ENCODE measurements at regions of chr22 and their contacts with region 1.

Region 1: GRCh38 chr22:17171313-17172171 is 12.5 kb upstream of the HDHD5 start:
- DNase-seq: peak; percentile 79 to 97
- H3K4me3 ChIP-seq: peak overlapping the region; percentile 39 to 69 (median 60)
- H3K27ac ChIP-seq: peak overlapping the region; percentile 41; the same call in 1 of the 2 replicates
- H3K4me1 ChIP-seq: peaks cover 0 to 11% (median 5%) of the 10 kb centered on the region in 4 experiments; a peak in 5 of 7 replicates
- H3K27me3 ChIP-seq: no peaks in the 10 kb centered on the region
- CTCF ChIP-seq: peak; percentile 81 to 92 (median 83)
- EP300 ChIP-seq: peak; percentile 2 to 29; a peak in 1 of 3 replicates
- POLR2A ChIP-seq: peak in 1 of 2 experiments; percentile 75; a peak in 2 of 3 replicates
- RAD21 ChIP-seq: peak; percentile 58 to 74

Region 2: GRCh38 chr22:17077255-17077654 is 94.3 kb before region 1 on chr22:
- CTCF ChIA-PET with region 1: interaction called, 10 read pairs
- POLR2A ChIA-PET with region 1: no interaction called
- DNase-seq: no peak
- H3K4me3 ChIP-seq: no peak overlapping the region
- H3K27ac ChIP-seq: no peak overlapping the region
- H3K4me1 ChIP-seq: no peaks in the 10 kb centered on the region
- H3K27me3 ChIP-seq: no peaks in the 10 kb centered on the region
- CTCF ChIP-seq: no peak
- EP300 ChIP-seq: no peak
- POLR2A ChIP-seq: no peak
- RAD21 ChIP-seq: no peak

Region 3: GRCh38 chr22:17191163-17191784 is 19.7 kb after region 1 on chr22:
- CTCF ChIA-PET with region 1: interaction called, 30 read pairs
- POLR2A ChIA-PET with region 1: interaction called, 42 read pairs
- DNase-seq: no peak
- H3K4me3 ChIP-seq: no peak overlapping the region
- H3K27ac ChIP-seq: no peak overlapping the region
- H3K4me1 ChIP-seq: peaks cover 0 to 9% (median 7%) of the 10 kb centered on the region in 4 experiments; a peak in 5 of 7 replicates
- H3K27me3 ChIP-seq: no peaks in the 10 kb centered on the region
- CTCF ChIP-seq: no peak
- EP300 ChIP-seq: no peak
- POLR2A ChIP-seq: no peak
- RAD21 ChIP-seq: no peak

Region 4: DNA sequence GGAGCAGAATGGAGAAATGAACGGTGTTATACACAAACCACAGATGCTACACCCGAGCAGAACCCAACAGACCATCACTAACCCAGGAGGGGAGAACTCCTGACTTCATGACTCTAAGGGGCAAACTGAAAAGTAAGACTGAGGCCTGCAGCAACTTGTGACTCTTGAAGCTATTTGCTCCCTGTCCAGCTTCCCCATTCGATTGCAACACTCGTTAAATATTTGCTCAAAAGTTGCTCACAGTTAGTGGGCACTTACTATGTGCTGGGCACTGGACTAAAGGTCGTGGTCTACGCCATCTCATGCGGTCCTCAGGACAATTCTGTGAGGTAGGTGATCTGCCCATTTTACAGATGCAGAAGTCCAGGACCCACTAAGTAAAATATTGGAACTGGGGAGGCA is 57.2 kb after region 1 on chr22:
- CTCF ChIA-PET with region 1: interaction called, 51 read pairs
- POLR2A ChIA-PET with region 1: interaction called, 16 read pairs
- DNase-seq: no peak
- H3K4me3 ChIP-seq: no peak overlapping the region
- H3K27ac ChIP-seq: no peak overlapping the region
- H3K4me1 ChIP-seq: peaks cover 8 to 18% (median 13%) of the 10 kb centered on the region in 4 experiments
- H3K27me3 ChIP-seq: no peaks in the 10 kb centered on the region
- CTCF ChIP-seq: no peak
- EP300 ChIP-seq: no peak
- POLR2A ChIP-seq: no peak
- RAD21 ChIP-seq: no peak

Region 5: GRCh38 chr22:17258015-17258787 is 86.7 kb after region 1 on chr22:
- CTCF ChIA-PET with region 1: interaction called, 14 read pairs
- POLR2A ChIA-PET with region 1: interaction called, 6 read pairs
- DNase-seq: peak in 1 of 2 experiments; percentile 74
- H3K4me3 ChIP-seq: peak overlapping the region in 3 of 4 experiments; percentile 2 to 40 (median 8); a peak in 4 of 8 replicates
- H3K27ac ChIP-seq: peak overlapping the region; percentile 77
- H3K4me1 ChIP-seq: peaks cover 26 to 42% (median 32%) of the 10 kb centered on the region in 4 experiments
- H3K27me3 ChIP-seq: no peaks in the 10 kb centered on the region
- CTCF ChIP-seq: no peak
- EP300 ChIP-seq: no peak
- POLR2A ChIP-seq: no peak
- RAD21 ChIP-seq: no peak; a peak in 1 of 4 replicates

Region 6: DNA sequence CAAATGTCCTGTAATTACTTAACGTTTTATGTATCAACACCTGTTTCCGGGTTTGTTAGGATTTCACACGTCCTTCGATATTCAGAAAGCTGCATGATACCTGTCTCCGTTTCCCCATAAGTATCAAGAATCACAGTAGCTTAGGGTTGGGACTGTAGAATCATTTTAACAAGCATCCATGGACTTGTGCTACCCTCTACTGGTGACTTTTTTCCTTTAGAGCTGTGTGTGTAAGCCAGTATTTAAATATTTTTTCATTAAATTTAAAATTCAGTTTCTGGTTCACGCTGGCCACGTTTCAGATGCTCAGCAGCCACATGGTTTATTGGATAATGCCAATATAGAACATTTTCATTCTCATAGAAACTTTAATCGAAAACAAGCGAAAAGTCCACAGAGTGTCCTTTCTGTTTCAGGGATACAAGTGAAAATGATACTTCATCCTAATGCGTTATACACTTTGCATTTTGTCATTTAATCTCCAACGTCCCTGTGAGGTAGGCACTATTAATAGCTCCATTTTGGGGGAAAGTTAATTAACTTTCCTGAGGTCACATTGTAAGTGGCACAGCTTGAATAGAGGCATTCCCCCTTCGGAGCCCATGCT is 330.2 kb after region 1 on chr22:
- CTCF ChIA-PET with region 1: interaction called, 13 read pairs
- POLR2A ChIA-PET with region 1: interaction called, 4 read pairs
- DNase-seq: no peak
- H3K4me3 ChIP-seq: no peak overlapping the region
- H3K27ac ChIP-seq: no peak overlapping the region
- H3K4me1 ChIP-seq: no peaks in the 10 kb centered on the region
- H3K27me3 ChIP-seq: no peaks in the 10 kb centered on the region
- CTCF ChIP-seq: peak in 2 of 3 experiments; percentile 52 to 63; a peak in 2 of 4 replicates
- EP300 ChIP-seq: no peak
- POLR2A ChIP-seq: no peak
- RAD21 ChIP-seq: peak; percentile 90 to 91